HEK293 (cell line): ENCODE measurements at regions of chr17 and their contacts with region 1.

Region 1: GRCh38 chr17:80147035-80147836 is at the start of gene EIF4A3:
- H3K4me3 ChIP-seq: peak within 1 kb of the TSS; percentile 97
- H3K27ac ChIP-seq: peak within 1 kb of the TSS; percentile 84
- H3K4me1 ChIP-seq: no peaks in the 10 kb centered on the region; the same call in 1 of the 2 replicates
- CTCF ChIP-seq: no peak

Region 2: DNA sequence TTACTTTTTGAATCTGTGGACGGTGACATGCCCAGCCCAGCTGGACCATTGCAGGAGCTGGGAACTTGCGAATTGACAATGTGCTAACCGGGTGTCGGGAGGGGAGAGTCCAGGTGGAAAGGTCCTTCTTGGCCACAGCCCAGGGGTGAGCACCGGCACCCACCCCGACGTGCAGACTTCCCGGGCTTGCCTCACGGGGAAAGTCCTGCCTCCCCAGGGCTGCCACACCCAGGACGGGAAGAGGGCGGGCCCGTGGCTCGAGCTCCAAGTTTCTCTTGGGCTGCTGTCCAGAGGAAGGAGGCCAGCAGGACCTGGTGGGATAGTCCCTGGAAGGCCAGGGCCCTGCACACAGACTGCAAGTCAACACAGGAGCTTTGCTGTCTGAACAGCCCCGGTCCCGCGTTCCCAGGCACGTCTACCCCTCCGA is 40.3 kb after region 1 on chr17:
- CTCF ChIA-PET with region 1: no interaction called
- POLR2A ChIA-PET with region 1: no interaction called
- H3K4me3 ChIP-seq: no peak overlapping the region
- H3K27ac ChIP-seq: no peak overlapping the region
- H3K4me1 ChIP-seq: no peaks in the 10 kb centered on the region
- CTCF ChIP-seq: no peak

Region 3: GRCh38 chr17:80219013-80219762 is 72.0 kb after region 1 on chr17:
- CTCF ChIA-PET with region 1: no interaction called
- POLR2A ChIA-PET with region 1: interaction called, 11 read pairs
- H3K4me3 ChIP-seq: peak overlapping the region; percentile 82
- H3K27ac ChIP-seq: peak overlapping the region; percentile 93
- H3K4me1 ChIP-seq: peaks cover 8% of the 10 kb centered on the region; the same call in 1 of the 2 replicates
- CTCF ChIP-seq: no peak

Region 4: GRCh38 chr17:80349751-80350150 is 202.5 kb after region 1 on chr17:
- CTCF ChIA-PET with region 1: no interaction called
- POLR2A ChIA-PET with region 1: interaction called, 10 read pairs
- H3K4me3 ChIP-seq: no peak overlapping the region
- H3K27ac ChIP-seq: no peak overlapping the region
- H3K4me1 ChIP-seq: no peaks in the 10 kb centered on the region
- CTCF ChIP-seq: no peak